ENCODE measurements at regions of chr1 and their contacts with region 1.

Region 1: DNA sequence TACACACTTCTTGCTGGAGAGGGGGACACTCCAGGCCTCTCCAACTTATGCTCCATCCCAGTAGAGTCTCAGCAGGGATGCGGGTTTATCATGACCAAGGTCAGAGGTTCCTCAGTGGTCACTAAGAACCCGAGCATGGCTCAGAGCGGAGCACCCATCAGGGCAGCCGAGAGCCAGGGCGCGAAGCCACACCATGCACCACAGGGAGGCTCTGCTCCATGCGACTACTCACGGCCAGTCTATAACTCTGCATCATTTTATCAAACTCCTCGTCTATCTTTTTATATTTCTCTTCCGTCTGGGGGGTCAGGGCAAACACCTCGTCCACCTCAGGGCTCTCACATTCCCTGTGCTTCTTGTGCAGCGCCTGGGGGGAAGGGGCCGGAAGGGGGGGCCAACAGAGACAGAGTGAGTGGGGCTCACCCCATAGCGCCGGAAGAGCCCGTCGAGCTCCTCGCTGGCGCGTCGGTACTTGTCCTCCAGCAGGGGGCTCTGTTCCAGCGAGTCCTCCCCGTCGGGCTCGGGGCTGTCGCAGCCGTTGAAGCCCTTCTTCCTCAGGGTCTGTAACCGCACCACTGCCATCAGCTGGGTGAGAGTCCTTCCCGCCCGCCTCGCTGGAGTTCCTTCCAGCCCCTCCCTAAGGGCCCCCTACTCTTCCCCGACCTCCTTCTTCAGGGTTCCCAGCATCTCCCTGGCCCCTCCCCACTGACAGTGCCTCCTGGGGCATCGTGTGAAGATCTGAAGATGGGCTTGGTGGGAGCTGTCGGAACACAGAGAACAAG is 20.0 kb downstream of the MEF2D start:
- DNase-seq: no peak
- ATAC-seq: no peak
- H3K4me3 ChIP-seq: no peak overlapping the region
- H3K27ac ChIP-seq: no peak overlapping the region
- H3K4me1 ChIP-seq: peaks cover 15% of the 10 kb centered on the region
- H3K27me3 ChIP-seq: no peaks in the 10 kb centered on the region
- CTCF ChIP-seq: peak; percentile 65

Region 2: DNA sequence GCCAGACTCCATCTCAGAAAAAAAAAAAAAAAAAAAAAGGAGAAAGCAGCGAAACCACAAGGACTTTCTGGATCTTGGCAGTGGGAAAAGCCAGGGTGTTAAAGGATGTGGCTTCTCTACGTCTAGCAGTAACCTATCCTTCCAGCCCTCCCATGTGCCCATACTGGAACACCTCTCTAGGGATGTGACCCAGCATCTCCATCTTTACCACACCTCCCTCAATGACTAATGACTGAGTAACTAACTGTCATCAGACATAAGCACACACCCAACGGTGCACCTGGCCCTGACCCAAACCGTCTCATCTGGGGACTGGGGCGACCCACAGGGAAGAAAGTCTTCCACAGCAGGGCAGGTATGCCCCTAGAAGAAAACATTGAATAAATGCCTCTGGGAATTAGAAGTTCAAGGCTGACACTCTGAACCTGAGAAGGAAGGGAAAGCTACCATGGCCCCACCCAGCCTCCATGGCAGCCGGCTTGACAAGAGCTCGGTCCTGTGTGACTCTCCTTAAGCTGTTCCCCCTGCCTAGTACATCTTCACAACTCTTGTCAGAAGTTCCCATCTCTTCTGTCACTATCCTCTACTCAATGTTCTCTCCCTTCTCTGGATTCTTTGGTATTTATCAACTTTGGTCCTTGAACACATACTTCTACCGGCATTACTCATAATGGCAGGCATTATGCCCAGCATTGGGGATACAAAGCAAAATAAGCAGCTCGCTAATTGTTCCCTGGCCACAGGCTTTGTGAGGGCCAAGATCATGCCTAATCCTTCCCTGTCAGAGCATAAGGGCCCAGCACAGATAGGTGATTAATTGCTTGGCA is 217.9 kb before region 1 on chr1:
- CTCF ChIA-PET with region 1: no interaction called
- POLR2A ChIA-PET with region 1: no interaction called
- intact Hi-C with region 1: no loop called
- DNase-seq: peak; percentile 98
- ATAC-seq: peak; percentile 85
- H3K4me3 ChIP-seq: peak overlapping the region; percentile 16; the same call in 1 of the 2 replicates
- H3K27ac ChIP-seq: peak overlapping the region; percentile 91
- H3K4me1 ChIP-seq: peaks cover 25% of the 10 kb centered on the region
- H3K27me3 ChIP-seq: no peaks in the 10 kb centered on the region
- CTCF ChIP-seq: no peak

Region 3: GRCh38 chr1:156430866-156431265 is 49.7 kb before region 1 on chr1:
- CTCF ChIA-PET with region 1: interaction called, 15 read pairs
- POLR2A ChIA-PET with region 1: no interaction called
- intact Hi-C with region 1: no loop called
- DNase-seq: no peak
- ATAC-seq: no peak
- H3K4me3 ChIP-seq: no peak overlapping the region
- H3K27ac ChIP-seq: no peak overlapping the region
- H3K4me1 ChIP-seq: no peaks in the 10 kb centered on the region
- H3K27me3 ChIP-seq: peaks cover 98% of the 10 kb centered on the region
- CTCF ChIP-seq: no peak

Region 4: DNA sequence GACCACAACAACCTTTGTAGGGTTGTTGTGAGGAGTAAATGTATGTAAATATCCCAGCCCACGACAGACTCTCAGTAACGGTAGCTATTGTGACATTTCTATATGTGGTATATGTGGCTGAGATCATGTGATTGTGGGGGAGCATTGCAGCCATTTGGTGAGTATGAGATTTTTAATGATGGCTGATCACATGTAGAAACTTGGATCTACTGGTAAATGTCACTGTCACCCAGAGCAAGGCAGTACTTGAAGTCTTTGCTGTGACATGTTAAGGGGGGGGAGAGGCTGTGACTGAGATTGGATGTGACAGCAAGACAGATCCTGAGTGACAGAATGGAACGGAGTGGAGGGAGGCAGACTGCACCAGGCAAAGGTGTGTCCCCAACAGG is 43.9 kb after region 1 on chr1:
- CTCF ChIA-PET with region 1: no interaction called
- POLR2A ChIA-PET with region 1: no interaction called
- intact Hi-C with region 1: no loop called
- DNase-seq: no peak
- ATAC-seq: no peak
- H3K4me3 ChIP-seq: no peak overlapping the region
- H3K27ac ChIP-seq: no peak overlapping the region
- H3K4me1 ChIP-seq: no peaks in the 10 kb centered on the region
- H3K27me3 ChIP-seq: no peaks in the 10 kb centered on the region
- CTCF ChIP-seq: no peak